ENCODE measurements at regions of chr10 and their contacts with region 1.

Region 1: GRCh38 chr10:97543025-97543575 is 29.5 kb upstream of the ANKRD2 start:
- DNase-seq: peak; percentile 86
- H3K4me3 Mint-ChIP-seq: no peak overlapping the region
- H3K27ac Mint-ChIP-seq: peak overlapping the region; percentile 68
- H3K4me1 Mint-ChIP-seq: peaks cover 23% of the 10 kb centered on the region
- H3K27me3 Mint-ChIP-seq: no peaks in the 10 kb centered on the region

Region 2: GRCh38 chr10:97561678-97562077 is 18.6 kb after region 1 on chr10:
- CTCF ChIA-PET with region 1: no interaction called
- intact Hi-C with region 1: loop called (anchors 1 kb)
- DNase-seq: no peak
- H3K4me3 Mint-ChIP-seq: no peak overlapping the region
- H3K27ac Mint-ChIP-seq: no peak overlapping the region
- H3K4me1 Mint-ChIP-seq: no peaks in the 10 kb centered on the region
- H3K27me3 Mint-ChIP-seq: no peaks in the 10 kb centered on the region

Region 3: DNA sequence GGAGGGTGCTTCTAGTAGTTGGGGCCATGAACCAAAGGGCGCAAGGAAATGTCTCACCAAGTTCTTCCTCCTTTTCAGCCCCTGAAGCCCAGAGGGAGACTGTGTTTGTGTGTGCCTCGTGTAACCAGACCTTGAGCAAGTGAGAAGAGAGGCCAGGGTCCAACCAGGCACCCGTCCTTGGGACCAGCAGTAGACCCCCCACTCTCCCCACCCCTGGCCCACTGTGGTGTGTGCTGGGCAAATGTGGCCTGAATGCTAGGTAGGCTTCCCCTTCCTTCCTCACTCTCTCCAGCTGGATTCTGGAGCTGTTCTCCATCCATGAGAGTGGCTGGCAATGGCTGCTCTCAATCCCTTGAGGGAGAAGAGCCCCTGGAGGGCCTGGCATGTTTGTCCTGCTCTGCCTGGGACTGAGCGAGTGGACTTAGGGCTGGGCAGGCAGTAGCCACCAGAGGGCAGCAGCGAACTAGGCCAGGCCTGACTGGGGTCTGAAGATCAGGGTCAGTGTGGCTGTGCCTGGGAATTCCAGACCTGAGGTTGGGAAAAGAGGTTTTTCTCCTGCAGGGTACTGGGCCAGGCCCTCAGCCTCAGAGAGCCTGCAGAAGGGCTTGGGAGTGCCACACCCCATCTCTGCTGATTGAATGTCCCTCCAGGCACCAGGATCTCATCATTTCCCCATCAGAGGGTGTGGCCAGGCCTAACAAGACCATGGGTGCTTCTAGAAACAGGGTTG is 216.2 kb after region 1 on chr10:
- CTCF ChIA-PET with region 1: no interaction called
- intact Hi-C with region 1: no loop called
- DNase-seq: peak; percentile 69
- H3K4me3 Mint-ChIP-seq: no peak overlapping the region
- H3K27ac Mint-ChIP-seq: no peak overlapping the region
- H3K4me1 Mint-ChIP-seq: no peaks in the 10 kb centered on the region
- H3K27me3 Mint-ChIP-seq: no peaks in the 10 kb centered on the region